B cell (primary cell): ENCODE measurements at regions of chr2 and their contacts with region 1.

Region 1: DNA sequence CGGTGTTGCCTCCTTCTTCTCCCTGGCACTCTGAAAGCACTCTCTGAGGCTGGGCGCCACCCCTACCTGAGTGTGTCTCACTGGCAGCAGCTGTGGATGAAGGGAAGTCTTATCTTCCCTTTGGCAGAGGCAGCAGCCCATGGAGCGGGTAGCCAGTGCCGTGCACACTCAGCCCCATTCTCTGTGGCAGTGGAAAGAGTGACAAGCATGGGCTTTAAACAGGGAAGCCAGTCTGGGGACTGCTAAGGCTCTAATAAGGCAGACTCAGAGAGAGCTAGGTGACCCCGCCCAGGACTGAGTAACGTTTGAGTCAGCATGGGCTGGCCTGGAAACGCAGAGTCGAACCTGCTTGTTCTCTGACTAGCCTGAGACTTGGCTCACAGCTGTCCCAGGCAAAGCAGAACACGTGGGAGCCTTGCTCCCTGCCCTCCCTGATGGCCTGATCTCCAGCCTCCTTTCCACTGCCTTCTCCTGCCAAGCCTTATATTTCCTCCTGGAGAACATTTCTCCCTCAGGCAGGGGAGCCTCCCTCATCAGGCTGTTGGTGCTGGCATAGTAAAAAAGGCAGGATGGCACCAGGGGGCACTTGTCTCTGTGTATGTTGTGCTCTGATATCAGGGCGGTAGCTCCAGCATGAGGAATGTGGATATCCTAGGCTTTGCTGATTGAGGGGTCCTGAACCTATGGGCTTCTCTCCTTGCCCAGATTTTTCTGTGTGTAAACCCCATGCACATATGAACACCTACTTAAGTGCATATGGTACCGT is 93.9 kb upstream of the LGALSL start:
- DNase-seq: peak; percentile 7
- ATAC-seq: peak; percentile 74
- H3K4me3 ChIP-seq: no peak overlapping the region
- H3K4me3 Mint-ChIP-seq: peak overlapping the region; percentile 68
- H3K27ac ChIP-seq: no peak overlapping the region
- H3K27ac Mint-ChIP-seq: peak overlapping the region; percentile 64
- H3K4me1 ChIP-seq: peaks cover 4 to 11% of the 10 kb centered on the region in 2 donors
- H3K4me1 Mint-ChIP-seq: peaks cover 11% of the 10 kb centered on the region
- H3K27me3 ChIP-seq: peaks cover 0 to 22% (median 9%) of the 10 kb centered on the region in 4 experiments
- H3K27me3 Mint-ChIP-seq: peaks cover 37% of the 10 kb centered on the region
- CTCF ChIP-seq: no peak

Region 2: GRCh38 chr2:64114063-64114911 is 245.8 kb before region 1 on chr2:
- CTCF ChIA-PET with region 1: no interaction called
- POLR2A ChIA-PET with region 1: no interaction called
- intact Hi-C with region 1: no loop called
- DNase-seq: peak; percentile 20
- ATAC-seq: no peak
- H3K4me3 ChIP-seq: no peak overlapping the region
- H3K4me3 Mint-ChIP-seq: peak overlapping the region; percentile 58
- H3K27ac ChIP-seq: no peak overlapping the region
- H3K27ac Mint-ChIP-seq: peak overlapping the region; percentile 26
- H3K4me1 ChIP-seq: peaks cover 11 to 26% of the 10 kb centered on the region in 2 donors
- H3K4me1 Mint-ChIP-seq: peaks cover 59% of the 10 kb centered on the region
- H3K27me3 ChIP-seq: no peaks in the 10 kb centered on the region
- H3K27me3 Mint-ChIP-seq: no peaks in the 10 kb centered on the region
- CTCF ChIP-seq: no peak

Region 3: GRCh38 chr2:64426183-64426952 is 66.3 kb after region 1 on chr2:
- CTCF ChIA-PET with region 1: no interaction called
- POLR2A ChIA-PET with region 1: no interaction called
- intact Hi-C with region 1: loop called (anchors 10 kb)
- DNase-seq: no peak
- ATAC-seq: no peak
- H3K4me3 ChIP-seq: no peak overlapping the region
- H3K4me3 Mint-ChIP-seq: no peak overlapping the region
- H3K27ac ChIP-seq: no peak overlapping the region
- H3K27ac Mint-ChIP-seq: no peak overlapping the region
- H3K4me1 ChIP-seq: no peaks in the 10 kb centered on the region
- H3K4me1 Mint-ChIP-seq: no peaks in the 10 kb centered on the region
- H3K27me3 ChIP-seq: no peaks in the 10 kb centered on the region
- H3K27me3 Mint-ChIP-seq: peaks cover 4% of the 10 kb centered on the region
- CTCF ChIP-seq: no peak